HepG2 (cell line): ENCODE measurements at regions of chr14 and their contacts with region 1.

Region 1: GRCh38 chr14:68788996-68789820 is 3.7 kb downstream of the ZFP36L1 start:
- DNase-seq: peak; percentile 75
- ATAC-seq: peak; percentile 21
- H3K4me3 ChIP-seq: peak overlapping the region; percentile 93 to 98 (median 94); a peak in 5 of 6 replicates
- H3K27ac ChIP-seq: peak overlapping the region; percentile 98
- H3K4me1 ChIP-seq: peaks cover 67% of the 10 kb centered on the region
- H3K27me3 ChIP-seq: no peaks in the 10 kb centered on the region; a peak in 1 of 5 replicates
- CTCF ChIP-seq: peak; percentile 90
- EP300 ChIP-seq: no peak
- POLR2A ChIP-seq: peak in 1 of 2 experiments; percentile 28; a peak in 1 of 4 replicates
- RAD21 ChIP-seq: peak; percentile 95

Region 2: DNA sequence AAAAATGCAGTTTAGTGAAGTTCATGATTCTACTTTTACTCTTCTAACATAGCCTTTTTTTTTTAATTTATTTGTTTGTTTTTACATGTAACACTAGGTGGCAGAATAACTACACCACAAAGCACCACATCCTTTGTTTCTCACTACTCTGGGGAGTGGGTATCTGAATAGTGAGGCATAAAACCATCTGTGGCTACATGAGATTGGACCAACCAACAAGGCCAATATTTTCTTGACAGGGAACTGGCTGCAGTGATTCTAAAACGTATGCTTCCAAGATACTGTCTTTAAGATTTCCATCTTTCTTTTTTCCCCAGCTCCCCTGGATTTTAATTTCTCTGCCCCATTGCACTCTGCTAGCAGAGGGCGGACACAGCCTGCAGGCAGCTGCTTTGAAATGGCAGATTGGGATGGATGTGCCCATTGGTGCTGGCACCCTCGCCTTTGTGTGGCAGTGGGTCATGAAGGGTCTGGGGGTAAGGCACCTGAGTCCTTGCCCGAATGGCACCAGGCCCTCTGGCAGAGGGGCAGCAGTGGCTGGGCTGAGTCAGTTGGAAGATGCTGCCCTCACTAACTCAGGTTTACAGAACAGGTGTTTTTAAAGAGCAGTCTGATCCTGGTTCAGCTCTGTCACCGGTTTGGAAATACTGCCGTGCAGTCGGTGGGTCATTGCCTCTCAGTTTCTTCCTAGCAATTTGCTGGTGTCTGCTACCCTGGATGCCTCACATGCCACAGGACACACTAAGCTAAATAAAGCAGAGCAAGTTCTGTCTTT is 540.5 kb before region 1 on chr14:
- CTCF ChIA-PET with region 1: interaction called, 15 read pairs
- POLR2A ChIA-PET with region 1: interaction called, 6 read pairs
- in situ Hi-C with region 1: no loop called
- intact Hi-C with region 1: loop called (anchors 1 kb)
- DNase-seq: peak; percentile 54
- ATAC-seq: peak; percentile 61
- H3K4me3 ChIP-seq: no peak overlapping the region
- H3K27ac ChIP-seq: no peak overlapping the region
- H3K4me1 ChIP-seq: peaks cover 65% of the 10 kb centered on the region
- H3K27me3 ChIP-seq: no peaks in the 10 kb centered on the region
- CTCF ChIP-seq: peak; percentile 69
- EP300 ChIP-seq: no peak
- POLR2A ChIP-seq: no peak
- RAD21 ChIP-seq: peak; percentile 62; the same call in 1 of the 2 replicates

Region 3: DNA sequence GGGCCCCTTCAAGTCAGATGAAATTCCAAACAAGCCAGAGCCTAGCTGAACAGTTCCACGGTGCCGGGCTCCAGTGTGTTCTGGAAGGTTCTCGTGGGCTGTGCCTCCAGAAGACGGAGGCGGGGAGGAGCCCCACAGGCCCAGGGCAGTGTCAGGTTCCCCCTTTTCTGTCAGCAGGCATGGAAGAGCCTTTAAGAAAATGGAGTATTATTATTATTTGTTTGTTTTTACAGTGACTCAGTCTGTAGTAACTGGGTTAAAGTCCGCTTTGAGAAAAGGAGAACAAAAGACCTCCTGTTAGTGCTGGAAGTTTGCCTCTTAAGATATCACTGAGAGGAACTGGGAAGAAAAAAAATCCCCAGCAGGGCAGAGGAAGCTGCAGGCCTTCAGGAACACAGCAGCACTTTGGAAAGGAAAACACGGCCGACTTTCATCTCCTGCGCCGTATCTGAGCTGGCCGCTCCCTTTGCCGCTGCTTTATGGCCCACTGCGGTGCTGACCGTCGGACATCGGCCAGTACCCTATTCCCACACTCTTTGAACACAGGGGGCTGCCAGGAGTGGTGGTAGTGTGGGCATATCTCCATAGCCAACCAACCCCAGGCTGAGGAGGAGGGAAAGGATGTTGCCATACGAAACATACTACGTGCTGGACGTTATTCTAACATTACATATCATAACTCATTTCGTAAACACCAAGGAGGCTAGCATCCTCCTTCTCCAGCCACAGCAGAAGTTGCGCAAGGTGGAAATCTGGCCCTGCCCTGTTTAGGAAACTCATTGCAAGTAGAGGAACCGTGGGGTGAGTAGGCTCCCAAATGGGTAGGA is 190.4 kb before region 1 on chr14:
- CTCF ChIA-PET with region 1: no interaction called
- POLR2A ChIA-PET with region 1: interaction called, 13 read pairs
- in situ Hi-C with region 1: no loop called
- intact Hi-C with region 1: loop called (anchors 10 kb)
- DNase-seq: peak; percentile 94
- ATAC-seq: peak; percentile 89
- H3K4me3 ChIP-seq: peak overlapping the region in 1 of 3 experiments; percentile 55; a peak in 3 of 6 replicates
- H3K27ac ChIP-seq: peak overlapping the region; percentile 79
- H3K4me1 ChIP-seq: peaks cover 85% of the 10 kb centered on the region
- H3K27me3 ChIP-seq: no peaks in the 10 kb centered on the region
- CTCF ChIP-seq: no peak
- EP300 ChIP-seq: peak in 1 of 2 experiments; percentile 86; a peak in 2 of 4 replicates
- POLR2A ChIP-seq: peak in 1 of 2 experiments; percentile 42; a peak in 2 of 4 replicates
- RAD21 ChIP-seq: no peak

Region 4: GRCh38 chr14:68727315-68728047 is 61.7 kb before region 1 on chr14:
- CTCF ChIA-PET with region 1: no interaction called
- POLR2A ChIA-PET with region 1: interaction called, 33 read pairs
- in situ Hi-C with region 1: no loop called
- intact Hi-C with region 1: no loop called
- DNase-seq: no peak
- ATAC-seq: peak; percentile 13; the same call in 2 of the 3 replicates
- H3K4me3 ChIP-seq: peak overlapping the region in 1 of 3 experiments; percentile 14; a peak in 1 of 6 replicates
- H3K27ac ChIP-seq: no peak overlapping the region
- H3K4me1 ChIP-seq: peaks cover 77% of the 10 kb centered on the region
- H3K27me3 ChIP-seq: no peaks in the 10 kb centered on the region
- CTCF ChIP-seq: no peak
- EP300 ChIP-seq: no peak
- POLR2A ChIP-seq: no peak
- RAD21 ChIP-seq: no peak

Region 5: GRCh38 chr14:68757618-68758081 is 31.6 kb before region 1 on chr14:
- CTCF ChIA-PET with region 1: no interaction called
- POLR2A ChIA-PET with region 1: interaction called, 17 read pairs
- in situ Hi-C with region 1: no loop called
- intact Hi-C with region 1: loop called (anchors 2 kb)
- DNase-seq: peak; percentile 39
- ATAC-seq: peak; percentile 30
- H3K4me3 ChIP-seq: peak overlapping the region in 2 of 3 experiments; percentile 3 to 60; a peak in 1 of 6 replicates
- H3K27ac ChIP-seq: no peak overlapping the region
- H3K4me1 ChIP-seq: peaks cover 97% of the 10 kb centered on the region
- H3K27me3 ChIP-seq: no peaks in the 10 kb centered on the region
- CTCF ChIP-seq: no peak
- EP300 ChIP-seq: no peak
- POLR2A ChIP-seq: no peak
- RAD21 ChIP-seq: no peak

Region 6: DNA sequence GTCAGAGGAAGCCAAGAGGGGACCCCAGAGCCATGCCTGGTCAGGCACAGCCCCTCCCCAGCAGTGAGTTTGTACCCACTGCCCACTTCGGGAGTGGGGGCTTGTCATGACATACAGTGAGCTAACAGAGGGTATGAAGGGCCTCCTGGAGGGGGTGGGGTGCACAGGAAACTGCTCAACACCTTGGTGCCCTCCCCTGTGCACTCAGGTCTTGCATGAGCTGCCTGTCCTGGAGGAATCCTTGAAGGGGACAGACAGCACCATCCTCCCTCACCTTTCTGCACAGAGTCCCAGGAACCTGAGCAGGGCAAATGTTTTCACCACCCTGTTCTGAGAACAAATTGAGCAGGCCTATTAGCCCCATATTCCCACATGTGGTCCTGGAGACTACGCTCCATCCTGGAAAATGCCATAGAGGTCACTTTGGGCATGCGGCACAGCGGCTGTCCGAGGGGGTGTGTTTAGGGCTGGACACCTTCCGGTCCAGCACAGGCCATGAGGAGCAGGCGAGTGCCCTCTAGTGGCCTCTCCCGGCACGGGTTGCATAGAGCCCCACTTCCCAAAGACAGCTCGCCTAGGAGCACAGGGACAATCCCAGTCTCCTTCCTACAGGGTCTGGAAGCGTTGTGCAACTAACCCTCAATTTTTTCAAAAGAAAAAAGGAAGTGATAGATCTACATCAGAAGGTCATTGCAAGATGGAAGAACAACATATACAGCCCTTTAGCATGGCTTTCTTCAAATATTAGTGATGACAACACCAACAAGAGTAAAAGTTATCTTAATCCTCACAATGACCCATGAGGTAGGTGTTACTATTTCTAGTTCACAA is 35.5 kb after region 1 on chr14:
- CTCF ChIA-PET with region 1: interaction called, 3 read pairs
- POLR2A ChIA-PET with region 1: interaction called, 57 read pairs
- in situ Hi-C with region 1: no loop called
- intact Hi-C with region 1: no loop called
- DNase-seq: peak; percentile 80
- ATAC-seq: peak; percentile 85
- H3K4me3 ChIP-seq: peak overlapping the region; percentile 13 to 67 (median 32); a peak in 5 of 6 replicates
- H3K27ac ChIP-seq: peak overlapping the region; percentile 81
- H3K4me1 ChIP-seq: peaks cover 69% of the 10 kb centered on the region
- H3K27me3 ChIP-seq: no peaks in the 10 kb centered on the region
- CTCF ChIP-seq: peak; percentile 98
- EP300 ChIP-seq: 0 out of 4 replicates have a peak, but pooled peaks have one; percentile 11 to 45
- POLR2A ChIP-seq: peak; percentile 41 to 43; a peak in 3 of 4 replicates
- RAD21 ChIP-seq: peak; percentile 88

Region 7: GRCh38 chr14:68834816-68835215 is 45.6 kb after region 1 on chr14:
- CTCF ChIA-PET with region 1: no interaction called
- POLR2A ChIA-PET with region 1: no interaction called
- in situ Hi-C with region 1: no loop called
- intact Hi-C with region 1: no loop called
- DNase-seq: no peak
- ATAC-seq: no peak
- H3K4me3 ChIP-seq: no peak overlapping the region
- H3K27ac ChIP-seq: no peak overlapping the region
- H3K4me1 ChIP-seq: 0 out of 2 replicates have a peak, but pooled peaks cover 6% of the 10 kb centered on the region
- H3K27me3 ChIP-seq: no peaks in the 10 kb centered on the region
- CTCF ChIP-seq: no peak
- EP300 ChIP-seq: no peak
- POLR2A ChIP-seq: no peak
- RAD21 ChIP-seq: no peak

Region 8: GRCh38 chr14:69043596-69044260 is 254.5 kb after region 1 on chr14:
- CTCF ChIA-PET with region 1: no interaction called
- POLR2A ChIA-PET with region 1: no interaction called
- in situ Hi-C with region 1: no loop called
- intact Hi-C with region 1: no loop called
- DNase-seq: no peak
- ATAC-seq: no peak
- H3K4me3 ChIP-seq: no peak overlapping the region
- H3K27ac ChIP-seq: no peak overlapping the region
- H3K4me1 ChIP-seq: peaks cover 26% of the 10 kb centered on the region
- H3K27me3 ChIP-seq: peaks cover 0 to 25% of the 10 kb centered on the region in 2 experiments; a peak in 3 of 5 replicates
- CTCF ChIP-seq: no peak
- EP300 ChIP-seq: no peak
- POLR2A ChIP-seq: no peak
- RAD21 ChIP-seq: no peak

Region 9: DNA sequence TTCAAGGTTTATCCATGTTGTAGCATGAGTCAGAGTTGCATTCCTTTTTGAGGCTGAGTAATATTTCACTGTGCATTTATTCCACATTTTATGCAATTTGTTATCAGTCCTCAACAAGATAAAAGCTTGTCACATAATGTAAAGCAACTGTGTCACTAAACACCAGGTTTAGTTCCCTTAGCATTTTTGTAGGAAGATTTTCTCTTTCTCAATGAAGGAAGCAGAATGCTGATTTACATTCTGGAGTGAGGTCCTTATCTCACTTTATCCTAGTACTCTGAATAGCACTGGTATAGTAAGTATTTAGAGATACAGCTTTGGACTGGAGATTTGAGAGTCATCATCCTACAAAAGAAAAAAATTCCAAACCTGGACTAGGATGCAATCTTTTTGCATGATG is 392.3 kb after region 1 on chr14:
- CTCF ChIA-PET with region 1: no interaction called
- POLR2A ChIA-PET with region 1: no interaction called
- in situ Hi-C with region 1: no loop called
- intact Hi-C with region 1: no loop called
- DNase-seq: no peak
- ATAC-seq: no peak
- H3K4me3 ChIP-seq: no peak overlapping the region
- H3K27ac ChIP-seq: no peak overlapping the region
- H3K4me1 ChIP-seq: peaks cover 13% of the 10 kb centered on the region
- H3K27me3 ChIP-seq: peaks cover 0 to 3% of the 10 kb centered on the region in 2 experiments; a peak in 1 of 5 replicates
- CTCF ChIP-seq: no peak
- EP300 ChIP-seq: no peak
- POLR2A ChIP-seq: no peak
- RAD21 ChIP-seq: no peak

Region 10: GRCh38 chr14:69443296-69443805 is 654.1 kb after region 1 on chr14:
- CTCF ChIA-PET with region 1: no interaction called
- POLR2A ChIA-PET with region 1: no interaction called
- in situ Hi-C with region 1: no loop called
- intact Hi-C with region 1: no loop called
- DNase-seq: no peak
- ATAC-seq: no peak
- H3K4me3 ChIP-seq: no peak overlapping the region
- H3K27ac ChIP-seq: no peak overlapping the region
- H3K4me1 ChIP-seq: no peaks in the 10 kb centered on the region
- H3K27me3 ChIP-seq: no peaks in the 10 kb centered on the region
- CTCF ChIP-seq: no peak
- EP300 ChIP-seq: no peak
- POLR2A ChIP-seq: no peak
- RAD21 ChIP-seq: no peak